Calu3 (cell line): ENCODE measurements at regions of chr1 and their contacts with region 1.

Region 1: DNA sequence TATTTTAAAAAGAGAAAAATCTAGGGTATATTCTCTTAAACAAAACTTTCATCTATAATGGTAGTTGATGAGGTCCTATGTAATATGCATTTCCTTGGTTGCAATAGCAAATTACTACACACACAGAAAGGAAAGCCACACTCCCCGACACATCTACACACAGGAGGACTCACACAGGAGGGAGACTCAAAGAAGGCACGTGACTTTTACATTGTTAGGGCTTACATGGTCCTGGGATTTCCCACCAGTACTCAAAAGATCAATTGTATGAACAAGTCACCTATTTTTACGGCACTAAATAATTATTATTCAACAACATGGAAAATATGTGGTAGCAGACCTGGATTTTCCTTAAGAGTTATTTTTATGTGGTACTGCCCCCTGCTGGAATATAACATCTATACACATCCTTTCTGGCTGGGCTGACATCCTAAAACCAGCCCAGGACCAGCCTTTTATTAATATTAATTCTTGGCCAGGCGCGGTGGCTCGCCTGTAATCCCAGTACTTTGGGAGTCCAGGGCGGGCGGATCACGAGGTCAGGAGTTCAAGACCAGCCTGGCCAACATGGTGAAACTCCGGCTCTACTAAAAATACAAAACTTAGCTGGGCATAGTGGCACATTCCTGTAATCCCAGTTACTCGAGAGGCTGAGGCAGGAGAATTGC is 33.9 kb upstream of the LGALS8 start:
- DNase-seq: peak; percentile 16
- H3K4me3 Mint-ChIP-seq: no peak overlapping the region
- H3K27ac Mint-ChIP-seq: no peak overlapping the region
- H3K4me1 Mint-ChIP-seq: no peaks in the 10 kb centered on the region
- H3K27me3 Mint-ChIP-seq: peaks cover 8% of the 10 kb centered on the region
- CTCF ChIP-seq: peak; percentile 63

Region 2: GRCh38 chr1:236534151-236534651 is 44.4 kb after region 1 on chr1:
- CTCF ChIA-PET with region 1: no interaction called
- intact Hi-C with region 1: loop called (anchors 5 kb)
- DNase-seq: no peak
- H3K4me3 Mint-ChIP-seq: no peak overlapping the region
- H3K27ac Mint-ChIP-seq: no peak overlapping the region
- H3K4me1 Mint-ChIP-seq: peaks cover 22% of the 10 kb centered on the region
- H3K27me3 Mint-ChIP-seq: no peaks in the 10 kb centered on the region
- CTCF ChIP-seq: no peak

Region 3: GRCh38 chr1:236990052-236990445 is 500.2 kb after region 1 on chr1:
- CTCF ChIA-PET with region 1: no interaction called
- intact Hi-C with region 1: no loop called
- DNase-seq: no peak
- H3K4me3 Mint-ChIP-seq: no peak overlapping the region
- H3K27ac Mint-ChIP-seq: no peak overlapping the region
- H3K4me1 Mint-ChIP-seq: no peaks in the 10 kb centered on the region
- H3K27me3 Mint-ChIP-seq: no peaks in the 10 kb centered on the region
- CTCF ChIP-seq: no peak